Posterior cingulate gyrus (tissue), 11 donors: ENCODE measurements at regions of chr3 and their contacts with region 1.

Region 1: DNA sequence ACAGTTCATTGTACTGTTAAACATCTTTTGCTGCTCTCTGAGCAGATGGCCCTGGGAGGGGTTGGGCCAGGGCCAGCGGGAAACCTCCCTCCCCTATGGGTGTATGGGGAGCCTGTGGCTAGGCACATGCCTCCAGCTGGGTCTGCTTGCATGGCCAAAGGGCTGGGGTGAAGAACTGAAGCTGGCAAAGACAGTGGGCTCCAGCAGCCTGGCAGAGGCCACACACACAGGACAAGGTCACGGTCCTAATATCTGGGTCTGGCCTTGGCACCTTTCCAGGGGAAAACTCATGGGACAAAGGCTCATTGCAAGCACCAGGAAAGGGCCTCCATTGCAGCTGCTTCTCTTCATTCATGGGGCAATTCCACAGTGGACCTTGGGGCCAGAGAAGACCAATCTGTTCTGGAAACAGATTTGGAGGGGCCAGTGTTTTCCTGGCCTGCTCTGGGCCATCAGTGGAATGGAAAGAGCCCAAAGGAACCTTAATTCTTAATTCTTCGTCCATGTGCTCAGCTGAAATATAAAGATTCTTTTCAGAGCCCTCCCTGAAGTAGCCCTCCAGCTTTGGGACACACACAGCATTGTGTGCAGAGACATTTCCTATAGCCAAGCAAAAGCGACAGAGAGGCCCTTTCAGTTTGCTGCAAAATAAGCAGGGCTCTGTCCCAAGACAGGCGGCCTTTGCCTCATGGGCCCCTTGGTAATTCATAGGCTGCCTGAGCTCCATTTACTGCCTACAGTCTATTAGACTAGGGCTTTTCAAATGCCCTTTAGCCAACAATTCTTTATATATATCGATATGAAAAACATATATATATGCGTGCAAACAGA is 11.3 kb upstream of the LIMD1 start:
- DNase-seq: peak; percentile 72 to 98 (median 81)

Region 2: DNA sequence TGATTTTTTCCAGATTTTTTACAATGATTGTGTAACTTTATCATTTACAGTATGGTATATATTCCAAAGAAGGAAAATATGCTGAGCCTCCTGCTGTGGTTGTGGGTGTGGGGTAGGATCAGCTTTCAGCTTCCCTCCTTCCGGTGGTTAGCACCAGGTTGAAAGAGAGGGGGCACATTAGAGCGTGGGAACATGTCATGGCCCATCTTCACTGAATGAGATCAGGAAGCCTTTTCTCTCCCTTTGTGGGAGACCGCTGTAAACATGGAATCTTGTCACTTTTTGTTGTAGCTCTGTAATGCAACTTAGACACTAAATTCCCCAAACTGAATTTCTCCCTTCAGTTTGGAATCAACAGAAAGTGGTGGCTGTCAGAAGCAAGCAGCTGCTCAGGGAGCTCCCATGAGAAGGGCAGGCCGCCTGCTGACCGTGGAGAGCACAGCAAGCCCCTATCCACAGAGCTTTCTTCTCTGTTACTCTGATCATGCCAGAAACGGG is 75.4 kb before region 1 on chr3:
- intact Hi-C with region 1: loop called (anchors 2 kb)
- DNase-seq: peak in 3 of 10 donors; percentile 12 to 32 (median 24)

Region 3: DNA sequence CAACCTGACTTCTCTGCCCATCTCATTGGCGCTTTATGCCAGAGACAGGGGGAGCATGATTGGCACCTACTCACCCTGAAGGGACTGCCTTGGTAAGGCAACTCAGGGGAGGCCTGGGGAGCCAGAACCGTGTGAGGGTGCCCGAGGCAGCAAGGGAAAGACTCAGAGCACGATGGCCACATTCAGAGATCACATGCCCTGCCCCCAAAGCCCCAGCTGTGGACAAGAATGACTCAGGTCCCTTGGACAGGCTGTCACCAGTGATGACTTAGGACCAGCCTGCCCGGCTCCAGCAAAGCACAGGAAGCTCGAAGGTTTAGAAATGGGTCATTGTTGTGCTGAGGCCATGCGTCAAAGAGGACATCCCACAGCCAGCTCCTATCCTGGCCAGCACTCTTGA is 37.8 kb before region 1 on chr3:
- intact Hi-C with region 1: loop called (anchors 2 kb)
- DNase-seq: peak; percentile 65 to 98 (median 85)

Region 4: DNA sequence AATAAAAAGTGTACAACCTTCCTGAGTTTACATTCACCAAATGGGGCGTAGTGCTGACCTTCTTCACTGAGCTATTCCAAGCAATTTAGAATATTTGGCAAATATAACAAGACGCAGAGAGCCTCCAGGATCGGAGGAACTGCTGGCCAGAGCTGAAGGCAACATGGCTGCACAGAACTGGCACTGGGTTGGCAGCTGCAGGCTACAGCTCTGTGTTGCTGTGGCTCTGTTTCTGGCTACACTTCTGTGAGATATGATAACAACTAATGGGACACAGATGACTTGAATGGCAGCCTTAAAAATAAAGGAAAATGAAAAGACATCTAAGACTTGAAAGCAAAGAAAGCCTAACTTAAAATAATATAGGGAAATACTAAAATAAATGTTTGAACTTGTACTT is 223.9 kb after region 1 on chr3:
- intact Hi-C with region 1: no loop called
- DNase-seq: no peak

Region 5: DNA sequence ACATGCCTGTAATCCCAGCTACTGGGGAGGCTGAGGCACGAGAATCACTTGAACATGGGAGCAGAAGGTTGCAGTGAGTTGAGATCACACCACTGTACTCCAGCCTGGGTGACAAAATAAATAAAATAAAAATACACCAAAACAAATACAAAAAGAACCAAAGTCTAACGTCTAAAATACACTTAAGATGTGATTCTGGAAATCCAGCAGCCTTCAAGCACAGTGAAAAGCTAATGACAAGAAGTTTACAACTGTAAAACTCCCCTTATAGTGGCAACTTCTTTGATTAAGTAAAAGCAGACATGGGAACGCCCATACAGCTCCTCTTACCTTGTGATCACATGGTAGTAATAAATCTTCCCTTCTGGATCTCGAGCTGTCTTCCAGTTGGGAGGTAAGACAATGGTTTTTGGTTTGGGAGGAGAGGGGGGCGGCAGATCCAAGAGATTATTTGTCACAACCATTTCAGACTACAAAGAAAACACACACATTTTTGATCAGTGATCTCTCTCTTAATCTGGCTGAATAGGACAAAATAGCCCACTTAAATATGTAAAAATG is 1459.1 kb after region 1 on chr3:
- intact Hi-C with region 1: no loop called
- DNase-seq: no peak